ENCODE measurements at regions of chrX and their contacts with region 1.

Region 1: GRCh38 chrX:71181910-71182799 is 37.5 kb downstream of the NLGN3 start:
- DNase-seq: peak; percentile 86
- H3K4me3 ChIP-seq: peak overlapping the region; percentile 53
- CTCF ChIP-seq: no peak

Region 2: DNA sequence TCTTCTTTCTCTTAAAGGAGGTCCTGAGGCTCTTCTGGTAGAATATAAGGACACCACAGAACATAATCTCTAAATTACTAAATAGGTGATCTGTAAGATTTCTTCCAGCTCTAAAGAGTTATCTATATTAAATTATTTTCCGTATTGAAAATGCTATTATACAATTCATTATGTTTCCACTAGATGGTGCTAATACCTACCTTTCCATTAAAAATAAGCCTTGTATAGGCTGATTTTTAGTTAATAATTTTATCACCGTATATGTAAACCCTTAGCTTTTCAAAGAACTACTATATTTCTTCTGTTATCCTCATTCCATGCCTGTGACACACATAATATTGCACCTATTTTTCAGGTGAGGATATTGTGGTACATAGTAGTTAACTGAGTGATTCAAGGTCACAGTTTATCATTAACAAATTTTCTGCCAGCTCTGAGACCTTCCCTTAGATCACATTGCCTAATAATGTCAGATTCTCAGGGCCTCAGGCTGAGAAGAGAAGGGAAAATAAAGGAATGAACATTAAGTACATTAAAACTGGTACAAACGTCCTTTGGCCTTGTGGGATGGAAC is 412.4 kb before region 1 on chrX:
- CTCF ChIA-PET with region 1: interaction called, 20 read pairs
- POLR2A ChIA-PET with region 1: no interaction called
- DNase-seq: no peak
- H3K4me3 ChIP-seq: no peak overlapping the region
- CTCF ChIP-seq: no peak

Region 3: GRCh38 chrX:70970482-70970995 is 211.6 kb before region 1 on chrX:
- CTCF ChIA-PET with region 1: interaction called, 90 read pairs
- POLR2A ChIA-PET with region 1: no interaction called
- DNase-seq: no peak
- H3K4me3 ChIP-seq: no peak overlapping the region
- CTCF ChIP-seq: no peak

Region 4: DNA sequence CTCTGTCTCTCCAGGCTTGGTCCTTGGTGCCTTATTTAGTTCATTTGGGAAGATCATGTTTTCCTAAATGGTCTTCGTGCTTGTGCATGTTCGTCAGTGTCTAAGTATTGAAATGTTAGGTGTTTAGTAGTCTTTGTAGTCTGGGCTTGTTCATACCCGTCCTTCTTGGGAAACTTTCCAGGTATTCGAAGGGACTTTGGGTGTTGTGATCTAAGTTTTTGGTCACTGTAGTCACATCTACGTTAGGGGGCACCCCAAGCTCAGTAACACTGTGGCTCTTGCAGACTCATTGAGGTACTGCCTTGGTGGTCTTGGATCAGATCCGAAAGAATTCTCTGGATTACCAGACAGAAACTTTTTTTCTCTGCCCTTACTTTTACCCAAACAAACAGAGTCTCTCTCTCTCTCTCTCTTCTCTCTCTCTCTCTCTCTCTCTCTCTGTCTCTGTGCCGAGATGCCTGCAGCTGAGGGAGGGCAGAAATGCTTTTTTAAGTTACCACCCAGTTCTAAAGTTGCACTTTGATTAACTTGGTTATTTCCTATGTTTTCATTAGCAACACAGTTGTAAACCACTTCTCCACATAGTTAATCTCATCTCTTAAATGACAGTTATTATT is 183.6 kb before region 1 on chrX:
- CTCF ChIA-PET with region 1: interaction called, 18 read pairs
- POLR2A ChIA-PET with region 1: no interaction called
- DNase-seq: no peak
- H3K4me3 ChIP-seq: no peak overlapping the region
- CTCF ChIP-seq: peak; percentile 16